Vagina (tissue), 2 donors: ENCODE measurements at regions of chr9 and their contacts with region 1.

Region 1: DNA sequence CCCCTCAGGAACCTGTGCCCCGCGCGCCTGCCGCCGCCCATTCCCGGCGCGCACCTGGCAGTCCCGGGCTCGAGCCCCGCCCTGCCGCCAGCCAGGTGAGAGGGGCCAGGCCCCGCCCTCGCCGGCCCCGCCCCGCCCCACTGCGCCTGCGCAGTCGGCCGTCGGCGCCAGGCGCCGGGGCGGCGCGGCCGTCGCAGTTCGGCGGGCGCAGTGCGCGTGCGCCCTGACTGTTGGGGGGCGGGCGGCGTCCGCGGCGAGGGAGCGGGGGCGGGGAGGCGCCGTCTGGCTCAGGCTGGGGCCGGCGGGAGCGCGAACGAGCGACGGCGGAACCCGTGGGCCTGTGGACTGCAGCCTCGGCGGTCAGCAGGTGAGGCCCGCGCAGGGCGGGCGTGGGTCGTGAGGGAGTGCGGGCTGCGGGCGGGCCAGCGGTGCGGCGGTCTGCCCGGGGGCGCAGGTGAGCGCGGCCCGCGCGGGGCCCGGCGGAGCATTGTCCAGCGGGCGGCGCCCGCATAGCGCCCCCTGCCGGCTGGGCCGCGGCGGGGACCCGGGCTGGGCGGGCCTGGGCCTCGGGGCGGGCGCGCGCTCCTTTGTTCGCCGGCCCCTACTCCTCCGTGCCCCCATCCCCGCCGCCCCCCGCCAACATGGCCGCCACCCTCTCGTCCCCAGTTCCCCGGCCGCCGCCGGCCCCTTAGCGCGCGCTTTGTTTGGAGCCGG is at the start of gene SPIN1:
- DNase-seq: no peak
- H3K4me3 ChIP-seq: peak within 1 kb of the TSS; percentile 67 to 88
- H3K27ac ChIP-seq: peak within 1 kb of the TSS; percentile 94
- H3K4me1 ChIP-seq: peaks cover 42% of the 10 kb centered on the region
- H3K27me3 ChIP-seq: no peaks in the 10 kb centered on the region
- CTCF ChIP-seq: peak in 1 of 3 experiments; percentile 60
- POLR2A ChIP-seq: peak in 1 of 2 donors; percentile 64
- total RNA-seq, gene SPIN1: 72.9 TPM

Region 2: GRCh38 chr9:88534456-88535261 is 146.3 kb after region 1 on chr9 and contains the start of gene NXNL2:
- intact Hi-C with region 1: loop called (anchors 2 kb)
- DNase-seq: peak in 1 of 2 donors; percentile 93
- H3K4me3 ChIP-seq: peak within 1 kb of the TSS; percentile 57 to 71
- H3K27ac ChIP-seq: peak within 1 kb of the TSS; percentile 91
- H3K4me1 ChIP-seq: peaks cover 57% of the 10 kb centered on the region
- H3K27me3 ChIP-seq: no peaks in the 10 kb centered on the region
- CTCF ChIP-seq: no peak
- POLR2A ChIP-seq: peak in 1 of 2 donors; percentile 33
- total RNA-seq, gene NXNL2: 2.5 TPM

Region 3: DNA sequence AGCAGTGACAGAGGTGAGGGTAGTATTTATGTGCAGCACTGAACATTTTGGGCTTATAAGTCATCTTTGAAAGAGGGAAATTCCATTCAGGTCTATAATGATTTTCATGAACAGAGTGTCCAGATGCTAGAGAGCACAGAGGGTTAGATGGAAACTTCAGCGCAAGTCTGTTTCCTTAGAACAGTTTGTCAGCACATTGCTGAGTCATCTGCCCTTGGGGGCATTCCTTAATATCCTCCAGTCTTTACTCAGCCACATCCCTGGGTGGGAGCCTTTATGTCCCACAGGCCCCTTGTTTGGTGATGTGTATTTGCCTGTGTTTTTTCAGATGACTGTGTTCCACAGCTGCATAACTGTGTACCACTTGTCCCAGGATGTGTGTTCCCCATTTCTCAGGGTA is 464.5 kb after region 1 on chr9:
- intact Hi-C with region 1: no loop called
- DNase-seq: no peak
- H3K4me3 ChIP-seq: no peak overlapping the region
- H3K27ac ChIP-seq: no peak overlapping the region
- H3K4me1 ChIP-seq: no peaks in the 10 kb centered on the region
- H3K27me3 ChIP-seq: no peaks in the 10 kb centered on the region
- CTCF ChIP-seq: no peak
- POLR2A ChIP-seq: no peak

Region 4: DNA sequence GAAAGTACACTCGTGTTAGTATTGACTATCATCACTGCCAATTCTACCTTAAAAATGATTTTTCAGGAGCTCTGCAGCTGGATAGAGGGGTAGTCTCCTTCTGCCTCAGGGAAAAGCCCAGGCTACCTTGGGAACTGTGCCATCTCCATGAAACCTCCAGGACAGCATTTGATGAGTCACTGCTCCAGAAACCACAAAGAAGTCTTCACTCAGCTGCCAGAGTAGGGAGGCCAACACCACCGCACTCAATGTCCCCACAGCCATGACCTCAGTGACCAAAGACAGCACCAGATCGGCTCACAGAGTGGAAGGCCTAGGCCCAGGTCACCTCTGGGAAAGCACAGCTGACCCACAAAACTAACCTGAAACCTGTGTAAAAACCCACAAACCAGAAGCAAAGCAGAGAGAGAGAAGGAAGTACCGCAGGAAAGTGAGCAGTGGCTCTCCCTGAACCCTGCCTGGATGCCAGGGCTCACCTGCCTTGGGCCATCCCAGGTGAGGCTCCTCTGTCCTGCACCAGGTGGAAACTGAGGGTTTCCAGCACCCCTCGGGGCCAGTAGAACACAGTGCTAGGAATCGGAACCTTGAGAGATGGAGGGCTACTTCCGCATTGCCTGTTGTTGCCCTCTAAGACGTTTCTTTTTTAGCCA is 633.0 kb after region 1 on chr9:
- intact Hi-C with region 1: loop called (anchors 5 kb)
- DNase-seq: no peak
- H3K4me3 ChIP-seq: no peak overlapping the region
- H3K27ac ChIP-seq: peak overlapping the region; percentile 92
- H3K4me1 ChIP-seq: peaks cover 32% of the 10 kb centered on the region
- H3K27me3 ChIP-seq: no peaks in the 10 kb centered on the region
- CTCF ChIP-seq: no peak
- POLR2A ChIP-seq: no peak